ENCODE measurements at regions of chr19 and their contacts with region 1.

Region 1: DNA sequence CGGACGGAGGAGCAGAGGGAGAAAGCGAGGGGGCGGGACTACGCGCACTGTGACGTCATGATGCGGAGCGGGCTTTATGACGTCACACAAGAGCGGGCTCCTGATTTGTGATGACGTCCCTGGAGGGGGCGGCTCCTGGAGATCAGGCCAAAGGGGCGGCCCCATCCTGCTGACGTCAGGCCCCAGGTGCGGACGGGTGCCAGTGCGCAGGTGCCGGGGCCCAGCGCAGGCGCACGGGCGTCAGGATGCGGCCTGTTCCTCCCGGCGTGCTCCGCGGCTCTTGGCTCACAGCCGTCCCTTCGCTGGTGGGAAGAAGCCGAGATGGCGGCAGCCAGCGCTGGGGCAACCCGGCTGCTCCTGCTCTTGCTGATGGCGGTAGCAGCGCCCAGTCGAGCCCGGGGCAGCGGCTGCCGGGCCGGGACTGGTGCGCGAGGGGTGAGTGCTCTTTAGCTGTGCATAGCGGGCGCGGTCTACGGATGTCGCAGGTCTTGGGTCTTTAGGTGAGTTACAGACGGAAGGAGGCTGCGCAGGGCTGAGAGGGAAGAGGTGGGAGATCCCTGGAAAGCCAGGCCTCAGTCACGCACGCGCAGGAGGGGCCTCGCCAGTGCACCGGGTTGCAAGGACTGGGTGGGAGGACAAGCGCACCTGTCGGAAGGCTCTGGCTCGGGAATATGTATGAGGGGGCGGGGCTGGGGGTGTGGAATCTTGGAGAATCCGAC is at the starts of genes EMC10 and GARIN5A:
- DNase-seq: peak; percentile 92
- H3K4me3 ChIP-seq: peak within 1 kb of the TSS; percentile 80 to 96 (median 85)
- H3K27ac ChIP-seq: peak within 1 kb of the TSS; percentile 48
- H3K4me1 ChIP-seq: peaks cover 7% of the 10 kb centered on the region
- H3K27me3 ChIP-seq: no peaks in the 10 kb centered on the region
- CTCF ChIP-seq: no peak
- total RNA-seq, gene EMC10: 53.8 to 77.1 TPM
- total RNA-seq, gene GARIN5A: 1.0 to 2.1 TPM

Region 2: GRCh38 chr19:50357178-50358100 is 118.9 kb before region 1 on chr19:
- CTCF ChIA-PET with region 1: no interaction called
- dilution Hi-C with region 1: loop called (anchors 5 kb)
- in situ Hi-C with region 1: no loop called
- intact Hi-C with region 1: loop called (anchors 1 kb)
- DNase-seq: peak; percentile 34
- H3K4me3 ChIP-seq: peak overlapping the region; percentile 16 to 53 (median 17)
- H3K27ac ChIP-seq: no peak overlapping the region
- H3K4me1 ChIP-seq: peaks cover 6% of the 10 kb centered on the region
- H3K27me3 ChIP-seq: no peaks in the 10 kb centered on the region
- CTCF ChIP-seq: peak; percentile 65 to 79

Region 3: GRCh38 chr19:50376166-50377050 is 100.0 kb before region 1 on chr19 and contains the start of gene NR1H2:
- CTCF ChIA-PET with region 1: no interaction called
- dilution Hi-C with region 1: no loop called
- in situ Hi-C with region 1: loop called in 1 of 2 experiments (anchors 5 kb)
- intact Hi-C with region 1: loop called (anchors 1 kb)
- DNase-seq: peak; percentile 92
- H3K4me3 ChIP-seq: peak within 1 kb of the TSS; percentile 63 to 94 (median 64)
- H3K27ac ChIP-seq: peak within 1 kb of the TSS; percentile 91
- H3K4me1 ChIP-seq: no peaks in the 10 kb centered on the region
- H3K27me3 ChIP-seq: no peaks in the 10 kb centered on the region
- CTCF ChIP-seq: no peak
- total RNA-seq, gene NR1H2: 53.8 to 65.5 TPM

Region 4: DNA sequence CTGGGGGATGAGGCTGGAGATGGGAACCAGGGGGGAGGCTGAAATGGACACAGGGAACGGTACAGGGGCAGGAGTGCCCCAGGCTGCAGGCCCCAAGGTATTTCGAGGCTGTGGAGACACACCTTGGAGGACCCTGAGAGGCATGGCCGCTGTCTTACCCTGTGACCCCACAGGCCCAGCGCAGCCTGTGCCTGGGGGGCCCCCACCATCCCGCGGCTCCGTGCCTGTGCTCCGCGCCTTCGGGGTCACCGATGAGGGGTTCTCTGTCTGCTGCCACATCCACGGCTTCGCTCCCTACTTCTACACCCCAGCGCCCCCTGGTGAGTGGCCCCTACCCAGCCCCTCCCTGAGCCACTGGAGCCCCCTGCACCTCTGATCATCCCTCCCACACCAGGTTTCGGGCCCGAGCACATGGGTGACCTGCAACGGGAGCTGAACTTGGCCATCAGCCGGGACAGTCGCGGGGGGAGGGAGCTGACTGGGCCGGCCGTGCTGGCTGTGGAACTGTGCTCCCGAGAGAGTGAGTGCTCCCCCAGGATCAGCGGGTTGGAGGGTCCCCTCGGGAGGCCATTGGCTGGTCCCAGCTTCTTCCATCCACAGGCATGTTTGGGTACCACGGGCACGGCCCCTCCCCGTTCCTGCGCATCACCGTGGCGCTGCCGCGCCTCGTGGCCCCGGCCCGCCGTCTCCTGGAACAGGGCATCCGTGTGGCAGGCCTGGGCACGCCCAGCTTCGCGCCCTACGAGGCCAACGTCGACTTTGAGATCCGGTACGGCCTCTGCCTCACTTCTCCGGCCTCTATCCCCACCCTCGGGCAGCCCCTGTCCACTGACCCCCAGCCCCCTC is 74.6 kb before region 1 on chr19:
- CTCF ChIA-PET with region 1: no interaction called
- dilution Hi-C with region 1: loop called (anchors 10 kb)
- in situ Hi-C with region 1: no loop called
- intact Hi-C with region 1: no loop called
- DNase-seq: no peak
- H3K4me3 ChIP-seq: no peak overlapping the region
- H3K27ac ChIP-seq: no peak overlapping the region
- H3K4me1 ChIP-seq: no peaks in the 10 kb centered on the region
- H3K27me3 ChIP-seq: no peaks in the 10 kb centered on the region
- CTCF ChIP-seq: no peak

Region 5: DNA sequence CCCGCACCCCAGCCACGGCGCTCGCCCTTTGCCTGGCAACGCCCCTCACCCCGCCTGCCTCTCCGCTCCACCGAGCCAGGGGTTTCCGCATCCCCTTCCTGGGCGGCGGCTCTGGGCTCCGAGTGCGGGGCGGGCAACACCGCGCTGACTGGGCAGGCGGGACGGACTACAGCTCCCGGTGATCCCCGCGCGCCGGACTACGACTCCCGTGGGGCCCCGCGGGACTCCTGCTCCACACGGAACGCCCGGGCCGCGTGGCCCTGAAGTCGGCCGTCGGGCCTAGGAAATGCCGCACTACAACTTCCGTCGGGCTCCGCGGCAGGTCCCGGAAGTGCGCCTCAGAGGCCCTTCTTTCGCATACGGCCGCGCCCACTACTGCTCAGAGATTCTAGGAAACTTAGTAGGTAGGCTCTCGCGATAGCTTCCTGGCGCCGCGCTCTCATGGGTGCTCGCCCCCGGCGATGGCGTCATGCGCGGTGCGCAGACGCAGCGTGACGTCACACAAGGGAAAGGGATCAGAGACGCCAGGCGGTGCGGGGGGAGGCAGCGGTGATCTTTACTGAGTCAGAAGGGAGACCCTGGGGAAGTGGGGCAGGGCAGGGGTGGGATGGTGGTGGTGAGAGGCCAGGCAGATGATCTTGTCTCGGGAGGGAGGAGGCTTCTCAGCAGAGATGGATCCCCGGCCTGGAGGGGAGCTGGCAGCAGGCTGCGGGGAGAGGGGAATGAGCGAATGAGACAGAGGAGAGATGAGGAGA is 34.9 kb after region 1 on chr19 and contains the start of gene JOSD2:
- CTCF ChIA-PET with region 1: no interaction called
- dilution Hi-C with region 1: no loop called
- in situ Hi-C with region 1: no loop called
- intact Hi-C with region 1: loop called (anchors 1 kb)
- DNase-seq: peak; percentile 99
- H3K4me3 ChIP-seq: peak within 1 kb of the TSS; percentile 82 to 96 (median 94)
- H3K27ac ChIP-seq: peak within 1 kb of the TSS; percentile 79
- H3K4me1 ChIP-seq: peaks cover 12% of the 10 kb centered on the region
- H3K27me3 ChIP-seq: no peaks in the 10 kb centered on the region
- CTCF ChIP-seq: no peak
- total RNA-seq, gene JOSD2: 17.3 to 71.1 TPM

Region 6: GRCh38 chr19:50520822-50521465 is 44.6 kb after region 1 on chr19:
- CTCF ChIA-PET with region 1: no interaction called
- dilution Hi-C with region 1: loop called (anchors 5 kb)
- in situ Hi-C with region 1: no loop called
- intact Hi-C with region 1: no loop called
- DNase-seq: no peak
- H3K4me3 ChIP-seq: no peak overlapping the region
- H3K27ac ChIP-seq: no peak overlapping the region
- H3K4me1 ChIP-seq: no peaks in the 10 kb centered on the region
- H3K27me3 ChIP-seq: no peaks in the 10 kb centered on the region
- CTCF ChIP-seq: no peak

Region 7: DNA sequence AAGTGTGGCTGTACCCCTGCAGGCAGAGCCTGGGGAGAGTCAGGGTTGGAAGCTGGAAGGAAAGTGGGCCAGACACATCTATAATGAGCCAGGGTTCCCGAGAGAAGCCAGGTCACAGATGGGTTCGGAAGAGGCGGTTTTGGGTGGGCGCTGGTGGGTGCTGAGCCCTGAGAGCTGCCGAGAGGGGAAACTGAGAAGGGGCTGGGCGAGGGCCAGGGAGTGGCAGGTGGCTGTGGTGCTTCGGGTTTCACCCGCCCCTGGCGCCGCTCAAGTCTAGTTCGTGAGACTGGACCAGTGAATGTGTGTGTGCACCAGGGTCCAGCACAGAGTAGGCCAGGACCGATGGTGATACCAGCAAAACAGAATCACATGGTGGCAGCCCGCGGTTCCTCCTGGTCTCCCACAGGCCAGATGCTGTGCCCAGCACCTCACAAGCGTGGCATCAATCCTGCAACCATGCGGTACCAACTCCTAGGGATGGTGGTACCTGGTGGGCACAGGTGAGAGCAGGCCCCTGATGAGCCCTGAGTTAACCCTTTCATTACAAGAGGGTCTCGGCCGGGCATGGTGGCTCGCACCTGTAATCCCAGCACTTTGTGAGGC is 93.7 kb after region 1 on chr19:
- CTCF ChIA-PET with region 1: no interaction called
- dilution Hi-C with region 1: loop called (anchors 5 kb)
- in situ Hi-C with region 1: no loop called
- intact Hi-C with region 1: no loop called
- DNase-seq: no peak
- H3K4me3 ChIP-seq: no peak overlapping the region
- H3K27ac ChIP-seq: no peak overlapping the region
- H3K4me1 ChIP-seq: no peaks in the 10 kb centered on the region
- H3K27me3 ChIP-seq: peaks cover 19% of the 10 kb centered on the region
- CTCF ChIP-seq: no peak

Region 8: GRCh38 chr19:50739914-50740426 is 263.6 kb after region 1 on chr19:
- CTCF ChIA-PET with region 1: no interaction called
- dilution Hi-C with region 1: no loop called
- in situ Hi-C with region 1: no loop called
- intact Hi-C with region 1: no loop called
- DNase-seq: no peak
- H3K4me3 ChIP-seq: no peak overlapping the region
- H3K27ac ChIP-seq: no peak overlapping the region
- H3K4me1 ChIP-seq: no peaks in the 10 kb centered on the region
- H3K27me3 ChIP-seq: no peaks in the 10 kb centered on the region
- CTCF ChIP-seq: no peak